Activated CD8-positive, alpha-beta T cell treated with anti-CD3 and anti-CD28 coated beads for 36 hours (primary cell): ENCODE measurements at regions of chr2 and their contacts with region 1.

Region 1: GRCh38 chr2:84939426-84940087 is 31.4 kb upstream of the KCMF1 start:
- DNase-seq: peak; percentile 92
- ATAC-seq: peak; percentile 84
- H3K4me3 Mint-ChIP-seq: peak overlapping the region; percentile 63
- H3K27ac Mint-ChIP-seq: peak overlapping the region; percentile 94
- H3K4me1 Mint-ChIP-seq: peaks cover 67% of the 10 kb centered on the region
- H3K27me3 Mint-ChIP-seq: no peaks in the 10 kb centered on the region
- CTCF ChIP-seq: no peak

Region 2: GRCh38 chr2:84849271-84849952 is 90.1 kb before region 1 on chr2:
- CTCF ChIA-PET with region 1: no interaction called
- POLR2A ChIA-PET with region 1: no interaction called
- intact Hi-C with region 1: no loop called
- DNase-seq: peak; percentile 76
- ATAC-seq: peak; percentile 54
- H3K4me3 Mint-ChIP-seq: peak overlapping the region; percentile 8
- H3K27ac Mint-ChIP-seq: peak overlapping the region; percentile 70
- H3K4me1 Mint-ChIP-seq: peaks cover 86% of the 10 kb centered on the region
- H3K27me3 Mint-ChIP-seq: no peaks in the 10 kb centered on the region
- CTCF ChIP-seq: no peak

Region 3: DNA sequence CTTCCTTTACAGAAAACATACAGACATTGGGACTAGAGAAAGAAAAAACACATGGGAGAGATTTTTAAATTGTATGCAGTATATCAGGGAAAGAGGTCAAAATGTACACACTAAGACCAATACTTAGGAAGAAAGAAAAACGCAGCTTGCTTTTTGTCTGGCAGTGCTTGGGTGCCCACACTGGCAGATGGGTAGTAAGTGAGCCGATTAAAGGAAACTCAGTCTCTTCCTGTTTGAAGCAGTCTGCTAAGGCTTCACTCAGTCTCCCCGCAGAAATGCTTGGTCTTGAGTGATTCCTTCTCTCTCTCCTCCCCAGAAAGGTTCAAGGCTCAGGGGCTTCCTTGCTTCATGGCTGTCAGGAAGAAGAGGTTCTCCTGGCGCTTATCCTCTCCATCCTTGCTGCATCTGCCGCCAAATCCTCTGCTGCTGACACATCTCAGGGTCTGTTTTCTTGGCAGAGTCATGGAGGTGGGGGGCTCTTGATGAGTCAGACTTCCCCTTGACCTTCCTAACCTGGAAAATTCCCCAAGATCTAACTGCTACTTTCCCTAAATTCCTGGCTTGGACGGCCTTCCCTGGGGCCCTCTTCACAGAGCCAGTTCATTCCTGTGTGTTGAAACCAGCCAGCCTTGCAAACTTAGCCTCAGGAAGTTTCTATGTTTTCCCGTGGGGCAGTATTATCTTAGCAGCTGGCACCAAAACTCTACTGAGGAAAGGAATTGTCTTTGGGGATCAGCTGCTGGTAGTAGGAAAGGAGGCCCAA is 44.6 kb before region 1 on chr2:
- CTCF ChIA-PET with region 1: no interaction called
- POLR2A ChIA-PET with region 1: interaction called, 6 read pairs
- intact Hi-C with region 1: loop called (anchors 5 kb)
- DNase-seq: peak; percentile 40
- ATAC-seq: peak; percentile 22
- H3K4me3 Mint-ChIP-seq: peak overlapping the region; percentile 27
- H3K27ac Mint-ChIP-seq: peak overlapping the region; percentile 77
- H3K4me1 Mint-ChIP-seq: peaks cover 57% of the 10 kb centered on the region
- H3K27me3 Mint-ChIP-seq: no peaks in the 10 kb centered on the region
- CTCF ChIP-seq: no peak

Region 4: DNA sequence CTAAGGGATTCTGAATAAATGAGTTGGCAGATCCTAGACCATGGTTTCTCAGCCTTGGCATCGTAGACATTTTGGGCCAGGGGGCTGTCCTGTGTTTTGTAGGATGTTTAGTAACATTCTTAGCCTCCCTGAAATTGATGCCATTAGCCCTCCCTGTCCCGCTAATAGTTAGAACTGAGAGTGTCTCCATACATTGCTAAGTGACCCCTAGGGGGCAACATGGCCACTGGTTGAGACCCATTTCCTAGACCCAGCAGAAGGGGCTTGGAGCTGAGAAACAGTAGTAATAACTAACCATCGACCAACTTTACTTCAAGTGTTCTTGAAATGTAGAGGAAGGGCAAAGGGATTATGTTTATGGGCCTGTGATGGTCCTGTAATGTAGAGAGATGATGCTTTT is 72.2 kb after region 1 on chr2:
- CTCF ChIA-PET with region 1: interaction called, 6 read pairs
- POLR2A ChIA-PET with region 1: interaction called, 5 read pairs
- intact Hi-C with region 1: loop called (anchors 2 kb)
- DNase-seq: no peak
- ATAC-seq: no peak
- H3K4me3 Mint-ChIP-seq: no peak overlapping the region
- H3K27ac Mint-ChIP-seq: peak overlapping the region; percentile 80
- H3K4me1 Mint-ChIP-seq: peaks cover 85% of the 10 kb centered on the region
- H3K27me3 Mint-ChIP-seq: no peaks in the 10 kb centered on the region
- CTCF ChIP-seq: no peak

Region 5: GRCh38 chr2:85564144-85564563 is 624.6 kb after region 1 on chr2:
- CTCF ChIA-PET with region 1: no interaction called
- POLR2A ChIA-PET with region 1: no interaction called
- intact Hi-C with region 1: no loop called
- DNase-seq: no peak
- ATAC-seq: no peak
- H3K4me3 Mint-ChIP-seq: no peak overlapping the region
- H3K27ac Mint-ChIP-seq: no peak overlapping the region
- H3K4me1 Mint-ChIP-seq: peaks cover 25% of the 10 kb centered on the region
- H3K27me3 Mint-ChIP-seq: no peaks in the 10 kb centered on the region
- CTCF ChIP-seq: no peak